Panc1 (cell line): ENCODE measurements at regions of chr2 and their contacts with region 1.

Region 1: GRCh38 chr2:144513388-144514101 is 6.4 kb downstream of the ZEB2 start:
- DNase-seq: no peak
- ATAC-seq: no peak
- H3K4me3 ChIP-seq: no peak overlapping the region
- H3K27ac ChIP-seq: no peak overlapping the region
- H3K4me1 ChIP-seq: 0 out of 2 replicates have a peak, but pooled peaks cover 6% of the 10 kb centered on the region
- H3K27me3 ChIP-seq: peaks cover 25% of the 10 kb centered on the region
- CTCF ChIP-seq: no peak

Region 2: GRCh38 chr2:144131042-144131441 is 382.5 kb before region 1 on chr2:
- CTCF ChIA-PET with region 1: no interaction called
- POLR2A ChIA-PET with region 1: interaction called, 16 read pairs
- in situ Hi-C with region 1: no loop called
- intact Hi-C with region 1: no loop called
- DNase-seq: peak; percentile 7
- ATAC-seq: no peak
- H3K4me3 ChIP-seq: no peak overlapping the region
- H3K27ac ChIP-seq: no peak overlapping the region
- H3K4me1 ChIP-seq: no peaks in the 10 kb centered on the region
- H3K27me3 ChIP-seq: no peaks in the 10 kb centered on the region
- CTCF ChIP-seq: no peak